Endothelial cell of umbilical vein (primary cell): ENCODE measurements at regions of chr12 and their contacts with region 1.

Region 1: GRCh38 chr12:16359512-16360491 is 12.4 kb downstream of the MGST1 start:
- DNase-seq: peak; percentile 27
- H3K4me3 ChIP-seq: no peak overlapping the region
- H3K27ac ChIP-seq: no peak overlapping the region
- H3K4me1 ChIP-seq: no peaks in the 10 kb centered on the region
- H3K27me3 ChIP-seq: no peaks in the 10 kb centered on the region
- CTCF ChIP-seq: peak; percentile 70 to 83
- POLR2A ChIP-seq: no peak

Region 2: DNA sequence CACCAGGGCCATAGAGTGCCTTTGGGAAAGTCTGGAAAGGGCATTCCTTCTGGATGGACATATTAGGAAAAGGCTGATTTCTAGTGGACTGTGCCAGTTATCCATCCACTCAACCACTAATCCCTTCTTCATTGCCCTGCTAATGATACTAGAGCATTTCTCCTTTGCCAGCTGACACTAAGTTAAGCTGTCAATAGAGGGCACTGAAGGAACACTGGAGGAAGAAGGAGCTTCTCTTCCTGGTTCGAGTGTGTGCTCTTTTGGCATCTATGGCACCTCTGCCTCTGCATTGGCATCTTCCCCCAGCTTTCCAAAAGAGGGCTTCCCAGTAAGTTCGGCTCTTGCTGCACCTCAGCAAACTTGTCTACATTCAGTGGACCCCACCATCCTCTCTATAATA is 283.2 kb before region 1 on chr12:
- CTCF ChIA-PET with region 1: no interaction called
- POLR2A ChIA-PET with region 1: no interaction called
- dilution Hi-C with region 1: no loop called
- intact Hi-C with region 1: loop called (anchors 5 kb)
- DNase-seq: no peak
- H3K4me3 ChIP-seq: no peak overlapping the region
- H3K27ac ChIP-seq: no peak overlapping the region
- H3K4me1 ChIP-seq: no peaks in the 10 kb centered on the region
- H3K27me3 ChIP-seq: peaks cover 0 to 6% of the 10 kb centered on the region in 2 experiments
- CTCF ChIP-seq: peak; percentile 5 to 22
- POLR2A ChIP-seq: no peak

Region 3: GRCh38 chr12:16165506-16165905 is 194.3 kb before region 1 on chr12:
- CTCF ChIA-PET with region 1: interaction called, 7 read pairs
- POLR2A ChIA-PET with region 1: no interaction called
- dilution Hi-C with region 1: no loop called
- intact Hi-C with region 1: loop called (anchors 1 kb)
- DNase-seq: peak; percentile 33
- H3K4me3 ChIP-seq: no peak overlapping the region
- H3K27ac ChIP-seq: no peak overlapping the region
- H3K4me1 ChIP-seq: no peaks in the 10 kb centered on the region
- H3K27me3 ChIP-seq: peaks cover 0 to 3% of the 10 kb centered on the region in 2 experiments
- CTCF ChIP-seq: peak in 1 of 2 donors; percentile 29
- POLR2A ChIP-seq: no peak